Right cardiac atrium (tissue), 5 donors: ENCODE measurements at regions of chr11 and their contacts with region 1.

Region 1: DNA sequence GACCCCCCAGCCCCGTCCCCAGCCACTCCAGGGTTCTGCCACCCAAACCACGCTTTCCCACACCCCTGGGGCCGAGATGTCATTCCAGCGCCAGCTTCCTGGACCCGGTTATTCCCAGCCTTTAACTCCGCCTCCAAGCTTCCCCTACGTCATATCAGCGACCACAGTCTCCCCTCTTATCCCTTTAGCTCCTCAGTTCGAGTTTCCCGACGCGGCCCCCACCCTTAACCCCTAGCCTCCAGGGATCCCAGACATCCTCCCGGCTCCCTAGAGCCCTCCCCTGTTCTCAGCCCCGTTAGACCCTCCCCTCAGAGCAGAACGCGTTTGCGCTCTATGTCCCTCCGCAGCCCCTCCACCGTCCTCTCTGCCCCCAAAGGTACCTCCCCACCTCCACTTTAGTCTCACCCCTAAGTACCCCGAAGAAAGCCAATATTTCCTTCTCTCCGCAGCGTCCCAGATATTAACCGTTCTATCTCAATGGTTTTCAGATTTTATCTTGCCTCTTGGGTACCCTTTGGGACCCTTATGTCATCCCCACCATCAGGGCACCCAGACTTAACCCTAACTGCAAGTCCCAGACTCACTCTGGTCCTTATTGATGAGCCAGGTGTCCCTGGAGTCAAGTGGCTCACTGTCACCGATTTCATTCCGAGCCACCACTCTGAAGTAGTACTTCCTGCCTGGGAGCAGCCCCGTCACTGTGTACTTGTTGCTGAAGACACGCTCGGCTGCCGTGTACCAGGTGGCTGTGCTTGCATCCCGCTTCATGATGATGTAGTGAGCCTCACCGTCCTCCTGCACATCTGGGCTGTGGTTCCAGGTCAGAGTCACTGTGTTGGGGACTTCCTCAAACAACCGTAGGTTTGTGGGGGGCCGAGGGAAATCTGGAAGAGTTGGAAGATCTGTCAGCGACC is 8.0 kb downstream of the TMEM86A start:
- DNase-seq: peak; percentile 78 to 89 (median 87)
- ATAC-seq: peak; percentile 76 to 92
- H3K4me3 ChIP-seq: peak overlapping the region; percentile 73
- H3K27ac ChIP-seq: peak overlapping the region; percentile 28
- H3K4me1 ChIP-seq: peaks cover 8% of the 10 kb centered on the region
- H3K27me3 ChIP-seq: no peaks in the 10 kb centered on the region

Region 2: GRCh38 chr11:18634140-18635032 is 72.2 kb before region 1 on chr11 and contains the start of gene SPTY2D1:
- intact Hi-C with region 1: loop called in 2 of 4 experiments (anchors 10 kb)
- DNase-seq: peak; percentile 100
- ATAC-seq: peak; percentile 99 to 100
- H3K4me3 ChIP-seq: peak within 1 kb of the TSS; percentile 94
- H3K27ac ChIP-seq: peak within 1 kb of the TSS; percentile 99
- H3K4me1 ChIP-seq: peaks cover 2% of the 10 kb centered on the region
- H3K27me3 ChIP-seq: no peaks in the 10 kb centered on the region
- total RNA-seq, gene SPTY2D1: 10.1 to 13.5 (median 12.3) TPM